Panc1 (cell line): ENCODE measurements at regions of chr22 and their contacts with region 1.

Region 1: DNA sequence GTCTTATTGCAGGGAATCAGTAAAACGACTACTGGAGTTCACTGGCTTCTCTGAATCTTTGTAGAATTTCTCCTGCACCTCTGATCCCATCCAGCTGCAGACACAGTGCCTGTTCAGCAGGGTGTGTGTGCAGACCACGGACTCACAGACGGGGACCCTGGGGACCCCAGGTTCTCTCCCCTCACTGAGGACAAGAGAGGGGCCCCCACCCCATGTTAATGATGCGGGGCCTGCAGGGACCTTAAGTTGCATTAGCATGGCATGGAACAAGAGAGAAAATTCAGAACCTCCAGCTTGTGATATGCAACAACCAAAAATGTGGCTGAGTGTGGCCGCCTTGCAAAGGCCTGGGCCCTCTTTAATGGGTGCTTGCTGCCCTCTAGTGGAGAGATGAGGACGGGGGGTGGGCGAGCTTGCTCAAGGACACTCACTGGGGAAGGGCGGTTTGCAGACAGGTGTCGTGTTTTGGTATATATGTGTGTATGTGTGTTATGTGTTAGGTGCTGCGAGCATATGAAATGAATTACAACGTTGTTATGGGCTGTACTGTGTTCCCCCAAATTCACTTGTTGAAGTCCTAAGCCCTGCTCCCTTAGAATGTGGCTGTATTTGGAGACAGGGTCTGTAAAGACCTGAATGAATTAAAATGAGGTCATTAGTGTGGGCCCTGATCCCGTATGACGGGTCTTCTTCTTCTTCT is 84.4 kb upstream of the SEPTIN5 start:
- DNase-seq: peak; percentile 39
- ATAC-seq: peak; percentile 96
- H3K4me3 ChIP-seq: no peak overlapping the region
- H3K27ac ChIP-seq: no peak overlapping the region
- H3K4me1 ChIP-seq: no peaks in the 10 kb centered on the region
- H3K27me3 ChIP-seq: no peaks in the 10 kb centered on the region
- CTCF ChIP-seq: peak; percentile 85

Region 2: DNA sequence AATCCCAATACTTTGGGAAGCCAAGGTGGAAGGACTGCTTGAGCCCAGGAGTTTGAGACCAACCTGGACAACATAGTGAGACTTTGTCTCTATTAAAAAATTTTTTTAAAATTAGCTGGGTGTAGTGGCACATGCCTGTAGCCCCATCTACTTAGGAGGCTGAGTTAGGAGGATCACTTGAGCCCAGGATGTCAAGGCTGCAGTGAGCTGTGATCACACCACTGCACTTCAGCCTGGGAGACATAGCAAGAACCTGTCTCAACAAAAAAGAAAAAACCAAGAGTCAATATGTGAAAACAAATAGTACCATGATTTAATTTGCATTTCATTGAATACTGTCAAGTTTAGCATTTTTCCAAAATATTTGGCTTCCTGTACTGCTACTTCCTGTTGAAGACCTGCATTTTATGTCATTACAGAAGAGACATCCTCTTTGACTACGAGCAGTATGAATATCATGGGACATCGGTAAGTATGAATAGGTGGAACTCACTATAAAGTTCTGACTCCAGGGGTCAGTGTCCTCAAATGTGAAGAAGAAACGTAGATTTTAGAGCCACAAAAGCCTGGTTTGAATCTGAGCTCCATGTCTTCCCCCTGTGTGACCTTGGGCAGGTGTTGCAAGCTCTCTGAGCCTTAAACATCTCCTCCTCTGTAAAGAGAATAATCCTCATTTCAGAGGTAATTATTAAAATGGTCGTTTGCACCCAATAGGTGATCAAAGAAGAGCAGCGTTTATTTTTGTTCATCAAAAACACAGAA is 134.1 kb before region 1 on chr22:
- CTCF ChIA-PET with region 1: interaction called, 7 read pairs
- POLR2A ChIA-PET with region 1: no interaction called
- in situ Hi-C with region 1: no loop called
- intact Hi-C with region 1: loop called (anchors 5 kb)
- DNase-seq: no peak
- ATAC-seq: no peak
- H3K4me3 ChIP-seq: no peak overlapping the region
- H3K27ac ChIP-seq: no peak overlapping the region
- H3K4me1 ChIP-seq: no peaks in the 10 kb centered on the region
- H3K27me3 ChIP-seq: no peaks in the 10 kb centered on the region
- CTCF ChIP-seq: no peak

Region 3: DNA sequence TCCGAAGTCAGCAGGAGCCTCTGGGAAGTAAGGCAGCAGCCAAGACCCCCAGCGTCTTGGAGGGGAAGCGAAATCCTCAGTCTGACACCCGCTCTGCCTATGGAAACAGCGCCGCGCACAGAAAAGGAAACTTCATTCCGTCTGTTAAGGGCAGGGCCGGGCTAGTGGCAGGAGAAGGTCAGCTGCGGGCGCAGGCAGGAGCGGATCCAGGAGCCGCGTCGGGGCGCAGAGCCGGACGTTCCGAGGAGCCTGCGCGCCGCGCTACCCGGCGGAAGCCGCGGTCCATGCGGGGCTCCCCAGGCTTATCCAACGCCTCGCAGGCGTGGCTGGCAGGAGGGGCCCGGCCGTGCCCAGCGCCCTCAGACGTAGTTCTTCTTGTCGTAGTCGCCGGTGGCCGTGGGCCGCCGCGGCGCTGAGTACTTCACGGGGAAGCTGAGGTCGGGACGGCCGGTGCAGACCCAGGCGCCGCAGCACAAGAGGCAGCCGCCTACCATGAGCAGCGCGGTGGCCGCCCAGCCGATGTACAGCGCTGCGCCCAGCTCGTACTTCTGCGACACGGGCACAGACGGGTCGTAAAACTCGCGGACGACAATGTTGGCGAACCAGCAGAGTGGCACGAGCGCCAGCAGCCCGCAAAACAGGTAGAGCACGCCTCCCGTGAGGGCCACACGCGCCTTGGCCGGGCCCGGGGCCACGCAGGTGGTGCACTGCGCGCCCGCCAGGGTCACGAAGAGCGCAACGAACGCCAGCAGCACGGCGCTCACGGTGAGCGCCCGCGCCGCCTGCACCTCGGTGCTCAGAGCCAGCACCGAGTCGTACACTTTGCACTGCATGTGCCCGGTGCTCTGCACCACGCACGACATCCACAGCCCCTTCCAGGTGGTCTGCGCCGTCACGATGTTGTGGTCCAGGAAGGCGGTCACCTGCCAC is 106.4 kb before region 1 on chr22:
- CTCF ChIA-PET with region 1: no interaction called
- POLR2A ChIA-PET with region 1: no interaction called
- in situ Hi-C with region 1: no loop called
- intact Hi-C with region 1: loop called (anchors 10 kb)
- DNase-seq: no peak
- ATAC-seq: peak; percentile 81
- H3K4me3 ChIP-seq: peak overlapping the region; percentile 16 to 26; a peak in 3 of 4 replicates
- H3K27ac ChIP-seq: no peak overlapping the region
- H3K4me1 ChIP-seq: no peaks in the 10 kb centered on the region
- H3K27me3 ChIP-seq: no peaks in the 10 kb centered on the region
- CTCF ChIP-seq: no peak